CD14-positive monocyte (primary cell): ENCODE measurements at regions of chr1 and their contacts with region 1.

Region 1: DNA sequence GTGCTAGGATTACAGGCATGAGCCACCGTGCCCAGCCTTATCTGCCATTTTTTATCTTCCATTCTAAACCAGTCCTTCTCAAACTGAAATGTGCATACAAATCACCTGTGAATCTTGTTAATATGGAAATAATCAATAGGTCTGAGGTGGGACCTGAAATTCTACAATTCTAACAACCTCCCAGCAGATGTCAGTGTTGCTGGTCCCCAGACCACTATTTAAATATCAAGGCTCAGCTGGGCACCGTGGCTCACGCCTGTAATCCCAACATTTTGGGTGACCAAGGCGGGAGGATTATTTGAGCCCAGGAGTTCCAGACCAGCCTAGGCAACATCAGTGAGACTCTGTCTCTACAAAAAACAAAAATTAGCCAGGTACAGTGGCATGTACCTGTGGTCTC is 4.1 kb downstream of the UQCRHL start:
- DNase-seq: peak in 2 of 3 donors; percentile 27
- H3K4me3 ChIP-seq: no peak overlapping the region
- H3K4me3 Mint-ChIP-seq: no peak overlapping the region
- H3K27ac ChIP-seq: no peak overlapping the region
- H3K27ac Mint-ChIP-seq: no peak overlapping the region
- H3K4me1 ChIP-seq: no peaks in the 10 kb centered on the region
- H3K4me1 Mint-ChIP-seq: no peaks in the 10 kb centered on the region
- H3K27me3 ChIP-seq: peaks cover 0 to 7% of the 10 kb centered on the region in 2 donors
- H3K27me3 Mint-ChIP-seq: peaks cover 30 to 51% (median 32%) of the 10 kb centered on the region in 3 donors
- CTCF ChIP-seq: peak; percentile 42

Region 2: GRCh38 chr1:15735304-15736037 is 67.9 kb before region 1 on chr1:
- intact Hi-C with region 1: no loop called
- DNase-seq: no peak
- H3K4me3 ChIP-seq: no peak overlapping the region
- H3K4me3 Mint-ChIP-seq: no peak overlapping the region
- H3K27ac ChIP-seq: no peak overlapping the region
- H3K27ac Mint-ChIP-seq: peak overlapping the region in 2 of 7 donors; percentile 43 to 46
- H3K4me1 ChIP-seq: no peaks in the 10 kb centered on the region
- H3K4me1 Mint-ChIP-seq: no peaks in the 10 kb centered on the region
- H3K27me3 ChIP-seq: no peaks in the 10 kb centered on the region
- H3K27me3 Mint-ChIP-seq: peaks cover 0 to 3% (median 0%) of the 10 kb centered on the region in 3 donors
- CTCF ChIP-seq: no peak

Region 3: GRCh38 chr1:15908597-15908996 is 105.2 kb after region 1 on chr1:
- intact Hi-C with region 1: loop called in 1 of 2 experiments (anchors 5 kb)
- DNase-seq: no peak
- H3K4me3 ChIP-seq: no peak overlapping the region
- H3K4me3 Mint-ChIP-seq: no peak overlapping the region
- H3K27ac ChIP-seq: no peak overlapping the region
- H3K27ac Mint-ChIP-seq: no peak overlapping the region
- H3K4me1 ChIP-seq: no peaks in the 10 kb centered on the region
- H3K4me1 Mint-ChIP-seq: no peaks in the 10 kb centered on the region
- H3K27me3 ChIP-seq: no peaks in the 10 kb centered on the region
- H3K27me3 Mint-ChIP-seq: no peaks in the 10 kb centered on the region
- CTCF ChIP-seq: no peak

Region 4: DNA sequence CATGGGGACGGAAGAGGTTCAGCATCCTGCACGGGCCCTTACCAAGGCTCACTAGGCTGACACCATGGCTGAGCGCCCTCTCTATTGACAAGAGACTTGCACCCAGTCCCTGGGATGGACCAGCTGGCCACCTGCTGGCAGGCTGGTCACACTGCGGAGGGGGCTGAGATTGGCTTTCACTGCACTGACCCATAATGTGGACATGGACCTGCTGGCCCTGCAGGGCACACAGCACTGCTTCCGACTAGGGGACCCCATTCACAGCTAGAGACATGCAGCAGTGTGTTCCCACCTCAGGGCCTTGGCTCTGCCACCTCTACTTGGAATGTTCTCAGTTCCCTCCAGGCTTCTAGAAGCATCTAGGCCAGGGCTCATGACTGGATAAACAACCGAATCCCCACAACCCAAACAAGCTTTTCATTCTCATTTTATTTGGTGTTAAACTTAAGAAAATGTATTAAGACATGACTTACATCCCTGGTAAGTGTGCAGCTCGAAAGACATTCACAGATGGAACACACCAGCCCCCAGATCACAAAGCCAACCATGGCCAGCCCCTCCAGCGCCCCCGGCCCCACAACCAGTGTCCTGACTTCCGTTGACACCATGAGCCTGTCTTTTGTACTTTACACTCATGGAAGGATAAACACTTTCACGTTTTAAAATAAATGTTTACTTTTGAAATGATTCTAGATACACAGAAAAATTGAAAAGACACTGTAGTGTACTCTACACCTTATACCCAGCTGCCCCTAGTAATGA is 191.4 kb after region 1 on chr1:
- intact Hi-C with region 1: loop called in 1 of 2 experiments (anchors 5 kb)
- DNase-seq: peak; percentile 46 to 65 (median 51)
- H3K4me3 ChIP-seq: no peak overlapping the region
- H3K4me3 Mint-ChIP-seq: no peak overlapping the region
- H3K27ac ChIP-seq: no peak overlapping the region
- H3K27ac Mint-ChIP-seq: no peak overlapping the region
- H3K4me1 ChIP-seq: no peaks in the 10 kb centered on the region
- H3K4me1 Mint-ChIP-seq: no peaks in the 10 kb centered on the region
- H3K27me3 ChIP-seq: no peaks in the 10 kb centered on the region
- H3K27me3 Mint-ChIP-seq: peaks cover 0 to 5% (median 0%) of the 10 kb centered on the region in 3 donors
- CTCF ChIP-seq: peak; percentile 86

Region 5: DNA sequence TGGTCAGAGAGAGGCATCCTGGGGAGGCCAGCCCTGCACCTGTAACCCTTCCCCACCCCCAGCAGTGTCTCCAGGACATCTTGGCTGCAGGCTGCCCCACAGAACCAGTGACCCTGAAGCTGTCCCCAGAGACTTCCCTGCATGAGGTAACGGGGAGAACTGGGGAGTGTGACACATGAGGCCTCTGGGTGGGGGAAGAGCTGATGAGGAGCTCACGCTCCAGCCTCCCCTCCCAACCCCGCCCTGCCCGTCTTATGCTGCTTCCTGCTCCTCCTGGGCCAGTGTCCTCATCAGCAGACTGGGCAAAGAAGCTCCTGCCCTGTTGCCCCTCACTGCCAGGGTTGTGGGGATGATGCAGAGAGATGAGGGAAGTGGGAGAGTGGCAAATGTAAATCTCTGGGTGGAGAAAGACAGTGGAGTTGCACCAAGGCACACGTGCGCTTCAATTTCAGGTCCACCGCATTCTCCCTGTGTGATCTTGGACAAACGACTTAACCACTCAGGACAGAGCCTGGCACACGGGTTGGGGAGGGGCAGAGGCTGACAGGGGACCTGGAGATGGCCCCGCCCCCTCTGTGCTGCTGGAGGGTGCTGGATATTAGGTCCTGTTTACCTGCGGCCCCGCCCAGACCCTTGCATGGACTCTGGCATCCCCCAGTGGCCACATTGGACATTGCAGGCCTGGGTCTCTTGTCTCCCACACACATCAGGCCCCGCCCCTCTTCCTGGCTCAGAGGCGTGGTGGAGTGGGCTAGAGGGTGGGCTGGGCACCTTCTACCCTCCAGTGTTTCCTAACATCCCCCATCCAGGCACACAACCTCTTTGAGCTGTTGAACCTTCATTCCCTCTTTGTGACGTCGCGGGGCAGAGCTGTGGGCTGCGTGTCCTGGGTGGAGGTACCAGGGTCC is 252.5 kb after region 1 on chr1:
- intact Hi-C with region 1: loop called in 1 of 2 experiments (anchors 10 kb)
- DNase-seq: peak; percentile 56 to 69 (median 61)
- H3K4me3 ChIP-seq: no peak overlapping the region
- H3K4me3 Mint-ChIP-seq: no peak overlapping the region
- H3K27ac ChIP-seq: no peak overlapping the region
- H3K27ac Mint-ChIP-seq: no peak overlapping the region
- H3K4me1 ChIP-seq: peaks cover 0 to 3% of the 10 kb centered on the region in 2 donors
- H3K4me1 Mint-ChIP-seq: peaks cover 4% of the 10 kb centered on the region
- H3K27me3 ChIP-seq: no peaks in the 10 kb centered on the region
- H3K27me3 Mint-ChIP-seq: peaks cover 2 to 10% (median 5%) of the 10 kb centered on the region in 3 donors
- CTCF ChIP-seq: peak; percentile 98